ENCODE measurements at regions of chr16 and their contacts with region 1.

Region 1: DNA sequence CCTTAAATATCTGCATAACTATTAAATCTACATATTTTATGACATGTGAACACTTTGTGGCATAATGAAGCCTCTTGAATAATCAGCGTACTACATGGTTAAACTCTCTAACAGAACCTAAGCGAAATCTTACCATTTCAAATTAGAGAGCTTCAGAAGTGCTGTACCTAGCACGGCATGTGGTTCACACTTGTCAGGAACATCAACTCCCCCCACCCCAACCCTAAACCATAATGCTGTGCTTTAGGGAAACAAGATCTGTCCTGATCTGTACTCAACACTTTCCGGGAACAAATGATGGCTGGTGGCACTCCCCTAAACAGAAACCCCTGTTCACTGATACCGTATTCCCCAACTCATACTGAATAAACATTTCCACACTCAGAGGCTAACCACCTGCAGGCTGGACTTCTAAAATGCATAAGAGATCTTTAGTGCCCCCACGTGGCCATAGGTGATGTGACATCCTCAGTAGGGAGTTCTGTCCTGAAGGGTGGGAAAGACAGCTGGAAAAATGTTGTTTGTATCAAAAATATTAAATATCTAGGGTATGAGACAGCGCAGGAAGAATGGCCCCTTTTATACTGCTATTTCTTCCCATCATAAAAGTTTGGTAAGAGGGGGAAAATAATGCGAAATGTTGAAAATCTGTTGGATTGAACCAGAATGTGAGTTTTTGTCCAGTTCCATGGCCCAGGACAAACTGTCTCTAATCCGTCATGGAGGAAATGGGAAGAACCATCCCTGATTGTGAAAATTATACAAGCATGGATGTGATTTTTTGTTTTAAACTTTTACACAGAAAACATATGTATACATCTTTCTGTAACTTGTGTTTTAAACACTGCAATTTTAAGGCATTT is 88.6 kb downstream of the USP31 start:
- DNase-seq: peak; percentile 80
- ATAC-seq: peak; percentile 72
- H3K4me3 Mint-ChIP-seq: no peak overlapping the region
- H3K27ac Mint-ChIP-seq: no peak overlapping the region
- H3K4me1 Mint-ChIP-seq: peaks cover 2% of the 10 kb centered on the region
- H3K27me3 Mint-ChIP-seq: peaks cover 15% of the 10 kb centered on the region
- CTCF ChIP-seq: peak; percentile 96

Region 2: GRCh38 chr16:22898874-22899348 is 161.8 kb before region 1 on chr16:
- CTCF ChIA-PET with region 1: interaction called, 4 read pairs
- POLR2A ChIA-PET with region 1: no interaction called
- intact Hi-C with region 1: loop called (anchors 10 kb)
- DNase-seq: peak; percentile 71
- ATAC-seq: no peak
- H3K4me3 Mint-ChIP-seq: no peak overlapping the region
- H3K27ac Mint-ChIP-seq: no peak overlapping the region
- H3K4me1 Mint-ChIP-seq: no peaks in the 10 kb centered on the region
- H3K27me3 Mint-ChIP-seq: peaks cover 14% of the 10 kb centered on the region
- CTCF ChIP-seq: peak; percentile 82

Region 3: DNA sequence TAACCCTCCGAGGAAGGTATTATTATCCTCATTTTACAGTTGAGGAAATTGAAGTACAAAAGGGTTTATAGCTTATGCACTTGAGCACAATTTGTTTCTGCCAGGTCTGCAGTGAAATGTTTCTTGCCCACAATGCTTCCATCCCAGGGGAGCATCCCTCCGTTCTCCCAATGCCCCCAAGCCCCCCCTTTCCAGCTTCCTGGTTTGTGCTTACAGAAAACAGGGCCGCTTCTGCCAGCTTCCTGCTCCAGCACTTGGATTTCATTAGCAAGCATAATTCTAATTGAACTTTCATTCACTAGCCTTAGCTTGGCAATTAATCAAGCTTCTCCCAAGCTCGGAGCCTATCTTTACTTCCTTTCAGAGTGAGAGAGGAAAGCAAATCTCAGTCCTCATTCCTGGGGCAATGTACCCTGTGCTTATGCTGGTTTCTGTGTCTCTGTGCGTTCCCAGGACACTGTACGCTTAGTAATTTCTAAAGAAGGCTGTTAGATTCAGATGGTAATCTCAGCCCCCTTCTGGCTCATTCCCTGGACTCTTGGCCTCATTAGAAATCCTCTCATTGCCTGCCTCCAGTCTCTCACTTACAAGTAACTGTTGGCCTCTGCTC is 105.1 kb before region 1 on chr16:
- CTCF ChIA-PET with region 1: no interaction called
- POLR2A ChIA-PET with region 1: no interaction called
- intact Hi-C with region 1: no loop called
- DNase-seq: no peak
- ATAC-seq: no peak
- H3K4me3 Mint-ChIP-seq: no peak overlapping the region
- H3K27ac Mint-ChIP-seq: no peak overlapping the region
- H3K4me1 Mint-ChIP-seq: no peaks in the 10 kb centered on the region
- H3K27me3 Mint-ChIP-seq: peaks cover 14% of the 10 kb centered on the region
- CTCF ChIP-seq: no peak